B cell (primary cell): ENCODE measurements at regions of chr6 and their contacts with region 1.

Region 1: GRCh38 chr6:313087-313486 is 20.8 kb downstream of the DUSP22 start:
- DNase-seq: peak; percentile 88
- ATAC-seq: peak; percentile 83
- H3K4me3 ChIP-seq: peak overlapping the region in 1 of 5 experiments; percentile 20
- H3K4me3 Mint-ChIP-seq: peak overlapping the region; percentile 50
- H3K27ac ChIP-seq: peak overlapping the region; percentile 63 to 85
- H3K27ac Mint-ChIP-seq: peak overlapping the region; percentile 82
- H3K4me1 ChIP-seq: peaks cover 77 to 89% of the 10 kb centered on the region in 2 donors
- H3K4me1 Mint-ChIP-seq: peaks cover 94% of the 10 kb centered on the region
- H3K27me3 ChIP-seq: no peaks in the 10 kb centered on the region
- H3K27me3 Mint-ChIP-seq: no peaks in the 10 kb centered on the region
- CTCF ChIP-seq: no peak

Region 2: DNA sequence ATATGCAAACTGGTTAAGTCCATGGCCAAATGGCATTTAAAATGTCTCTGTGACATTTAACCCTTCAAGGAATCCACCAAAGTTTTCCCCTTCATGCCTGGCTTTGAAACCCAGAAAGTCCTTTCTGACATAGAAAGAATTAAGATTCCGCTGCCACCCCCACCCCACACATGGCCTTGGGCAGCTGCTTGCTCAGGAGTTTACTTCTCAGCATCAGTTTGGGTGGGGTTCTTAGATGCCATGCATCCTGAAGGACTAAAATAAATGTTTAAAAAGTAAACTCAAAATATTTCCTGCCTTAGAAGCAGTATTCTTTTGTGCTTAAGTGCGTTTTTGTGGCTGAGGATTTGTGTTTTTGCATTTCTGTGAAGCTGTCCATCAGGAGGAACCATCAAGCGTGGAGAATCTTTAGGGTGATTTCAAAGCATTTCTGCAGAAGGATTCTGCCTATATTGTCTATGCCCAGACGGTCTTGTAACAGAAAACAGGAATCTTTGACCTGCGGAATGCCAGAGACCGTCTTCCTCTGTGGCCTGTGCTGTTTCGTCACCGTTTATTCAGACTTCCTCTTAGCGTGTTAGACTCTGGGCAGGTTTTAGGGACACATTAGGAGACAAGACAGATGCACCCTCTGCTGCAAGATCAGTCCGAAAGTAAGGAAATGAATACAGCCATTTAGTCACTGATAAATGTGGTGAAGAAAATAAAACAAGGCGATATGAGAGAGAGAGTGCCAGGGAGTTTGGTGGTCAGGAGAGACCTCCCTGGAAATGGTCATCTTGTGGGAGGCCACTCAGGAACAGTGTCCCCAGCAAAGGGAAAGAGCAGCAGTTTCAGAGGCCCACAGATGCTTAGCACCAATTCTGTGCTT is 14.6 kb before region 1 on chr6:
- CTCF ChIA-PET with region 1: interaction called, 15 read pairs
- POLR2A ChIA-PET with region 1: interaction called, 20 read pairs
- intact Hi-C with region 1: loop called (anchors 1 kb)
- DNase-seq: peak; percentile 78
- ATAC-seq: peak; percentile 53
- H3K4me3 ChIP-seq: peak overlapping the region in 4 of 5 experiments; percentile 2 to 38 (median 22)
- H3K4me3 Mint-ChIP-seq: no peak overlapping the region
- H3K27ac ChIP-seq: peak overlapping the region; percentile 54 to 95
- H3K27ac Mint-ChIP-seq: no peak overlapping the region
- H3K4me1 ChIP-seq: peaks cover 58 to 76% of the 10 kb centered on the region in 2 donors
- H3K4me1 Mint-ChIP-seq: peaks cover 5% of the 10 kb centered on the region
- H3K27me3 ChIP-seq: no peaks in the 10 kb centered on the region
- H3K27me3 Mint-ChIP-seq: no peaks in the 10 kb centered on the region
- CTCF ChIP-seq: no peak

Region 3: DNA sequence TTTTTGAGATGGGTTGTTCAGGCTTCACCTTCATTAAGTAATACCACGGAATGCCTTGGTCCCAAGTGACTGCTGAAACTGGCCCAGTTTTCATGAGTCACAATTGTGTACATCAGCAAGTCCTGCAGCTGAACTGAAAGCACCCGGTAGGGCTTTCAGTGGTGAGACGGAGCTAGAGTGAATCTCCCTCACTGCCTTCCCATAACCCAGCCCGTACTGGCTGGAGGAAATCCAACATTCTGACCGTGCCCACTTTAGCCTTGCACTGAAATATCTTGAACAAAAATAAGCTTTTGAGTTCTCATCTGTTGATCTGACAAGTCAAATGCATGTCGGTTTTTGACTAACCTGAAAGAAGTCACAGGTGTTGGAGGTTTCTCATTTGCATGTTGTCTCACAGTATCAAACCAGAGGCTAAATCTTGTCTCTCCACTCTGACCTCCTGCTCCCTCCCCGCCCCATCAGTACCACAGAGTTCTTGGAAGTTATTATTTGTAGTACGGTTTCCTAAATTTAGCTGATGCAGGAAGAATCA is 15.1 kb after region 1 on chr6:
- CTCF ChIA-PET with region 1: interaction called, 10 read pairs
- POLR2A ChIA-PET with region 1: interaction called, 3 read pairs
- intact Hi-C with region 1: loop called (anchors 2 kb)
- DNase-seq: peak; percentile 62
- ATAC-seq: peak; percentile 77
- H3K4me3 ChIP-seq: peak overlapping the region in 3 of 5 experiments; percentile 18 to 32 (median 32)
- H3K4me3 Mint-ChIP-seq: no peak overlapping the region
- H3K27ac ChIP-seq: peak overlapping the region in 1 of 2 donors; percentile 2
- H3K27ac Mint-ChIP-seq: no peak overlapping the region
- H3K4me1 ChIP-seq: peaks cover 41 to 70% of the 10 kb centered on the region in 2 donors
- H3K4me1 Mint-ChIP-seq: peaks cover 3% of the 10 kb centered on the region
- H3K27me3 ChIP-seq: no peaks in the 10 kb centered on the region
- H3K27me3 Mint-ChIP-seq: no peaks in the 10 kb centered on the region
- CTCF ChIP-seq: no peak

Region 4: DNA sequence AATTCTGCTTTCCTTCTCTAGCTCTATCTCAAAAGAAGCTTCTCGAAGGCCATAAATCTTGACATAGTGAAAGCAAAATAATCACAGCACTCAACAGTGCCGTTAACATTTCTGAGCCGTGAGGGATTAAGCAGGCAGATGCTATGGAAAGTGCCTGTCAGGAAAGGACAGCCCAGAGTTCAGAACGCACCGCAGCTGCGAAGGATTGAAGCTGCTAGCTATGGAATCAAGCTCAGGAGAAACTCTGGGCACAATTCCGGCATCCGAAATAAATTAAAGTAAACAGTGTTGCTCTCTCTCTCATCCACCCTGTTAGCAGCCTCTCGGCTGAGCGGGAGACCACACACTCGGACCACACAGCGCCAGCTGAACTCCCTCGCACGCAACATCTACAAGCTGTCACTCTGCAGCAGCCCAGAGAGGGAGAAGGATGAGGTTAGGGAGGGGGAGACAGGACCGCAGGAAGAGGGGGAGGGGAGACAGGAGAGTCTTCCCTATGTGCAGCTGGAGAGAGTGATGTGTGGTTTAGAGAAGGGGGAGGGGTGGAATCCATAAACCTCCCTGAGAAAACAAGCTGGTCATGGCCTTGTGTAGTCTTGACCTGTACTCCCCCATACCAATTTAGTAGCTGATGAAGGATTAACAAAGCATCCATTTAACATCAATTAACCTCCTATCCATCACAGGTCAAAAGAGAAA is 370.8 kb after region 1 on chr6:
- CTCF ChIA-PET with region 1: no interaction called
- POLR2A ChIA-PET with region 1: no interaction called
- intact Hi-C with region 1: no loop called
- DNase-seq: no peak
- ATAC-seq: no peak
- H3K4me3 ChIP-seq: no peak overlapping the region
- H3K4me3 Mint-ChIP-seq: no peak overlapping the region
- H3K27ac ChIP-seq: no peak overlapping the region
- H3K27ac Mint-ChIP-seq: no peak overlapping the region
- H3K4me1 ChIP-seq: peaks cover 11 to 16% of the 10 kb centered on the region in 2 donors
- H3K4me1 Mint-ChIP-seq: peaks cover 39% of the 10 kb centered on the region
- H3K27me3 ChIP-seq: no peaks in the 10 kb centered on the region
- H3K27me3 Mint-ChIP-seq: no peaks in the 10 kb centered on the region
- CTCF ChIP-seq: no peak